Left cardiac atrium (tissue), 4 donors: ENCODE measurements at regions of chr18 and their contacts with region 1.

Region 1: GRCh38 chr18:864872-865273 is 39.8 kb upstream of the ADCYAP1 start:
- DNase-seq: peak; percentile 76
- ATAC-seq: peak; percentile 78 to 90

Region 2: DNA sequence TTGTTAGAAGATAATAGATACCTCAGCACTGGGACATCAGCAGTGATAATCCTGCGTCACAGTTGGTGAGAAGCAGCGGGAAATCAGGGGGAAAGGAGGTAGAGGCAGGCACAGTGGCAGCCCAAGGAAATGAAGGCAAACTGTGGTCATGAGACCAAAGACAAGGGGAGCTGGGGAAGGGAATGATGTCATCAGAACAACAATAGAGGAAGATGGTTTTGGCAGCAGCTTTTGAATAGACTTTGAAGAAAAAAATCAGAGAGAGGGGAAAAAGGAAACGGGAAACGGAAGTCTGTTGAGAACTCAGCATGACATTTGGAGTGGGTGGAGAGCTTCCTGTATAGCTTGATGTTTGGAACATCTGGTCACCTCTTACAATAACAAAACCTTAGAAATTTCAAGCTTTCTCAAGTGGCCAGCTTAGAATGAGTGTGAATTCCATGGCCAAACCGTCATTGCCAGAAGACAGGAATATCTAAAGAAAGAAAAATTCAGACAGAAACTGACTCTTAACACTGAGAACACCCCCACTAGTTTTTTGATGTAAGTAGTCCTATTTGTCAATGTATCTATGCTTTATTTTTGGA is 34.5 kb before region 1 on chr18:
- intact Hi-C with region 1: no loop called
- DNase-seq: no peak
- ATAC-seq: peak; percentile 62 to 79

Region 3: GRCh38 chr18:961644-962355 is 96.9 kb after region 1 on chr18:
- intact Hi-C with region 1: loop called (anchors 5 to 10 kb)
- DNase-seq: peak; percentile 25
- ATAC-seq: peak; percentile 42 to 53

Region 4: DNA sequence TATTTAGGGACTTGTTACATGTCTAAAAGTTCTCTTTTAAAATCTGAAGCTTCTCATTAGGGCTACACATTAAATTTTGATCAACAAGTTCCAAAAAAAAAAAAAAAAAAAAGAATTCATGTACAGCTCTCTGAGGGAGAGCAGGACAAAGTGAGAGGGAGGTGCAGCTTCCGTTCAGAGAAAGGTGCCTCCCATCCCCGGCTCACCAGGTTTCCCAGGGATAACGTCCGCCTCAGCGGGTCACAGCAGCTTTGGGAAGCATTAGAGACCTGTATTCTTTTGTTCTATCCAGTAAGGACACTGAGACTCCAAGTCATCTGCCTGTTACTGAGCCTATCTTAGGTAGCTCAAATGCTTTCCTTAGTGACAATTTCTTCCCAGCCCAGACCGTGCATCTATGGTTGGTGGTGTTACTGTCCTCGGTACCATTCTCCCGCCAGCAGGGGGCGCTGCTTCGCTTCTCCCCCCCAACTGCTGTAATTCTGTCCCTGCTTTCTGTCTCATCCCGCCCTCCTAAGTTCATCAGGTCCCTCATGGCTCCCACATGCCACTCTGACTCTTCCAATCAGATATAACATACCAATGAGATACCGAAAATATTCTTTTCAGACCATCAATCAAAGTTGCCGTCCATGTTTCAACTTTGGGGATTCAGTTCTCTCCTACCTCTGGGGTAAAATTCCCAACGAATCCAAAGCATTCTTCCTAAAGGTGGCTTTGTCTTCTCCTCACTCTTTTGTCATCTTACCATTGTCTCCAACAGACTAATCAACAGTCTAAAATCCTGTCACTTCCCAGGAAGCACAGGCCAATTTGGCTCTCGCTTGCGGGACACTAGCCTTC is 1240.0 kb after region 1 on chr18:
- intact Hi-C with region 1: loop called in 1 of 2 experiments (anchors 10 kb)
- DNase-seq: peak; percentile 47
- ATAC-seq: peak; percentile 77 to 79